Cardiac septum (tissue), 1 donor: ENCODE measurements at regions of chr5 and their contacts with region 1.

Region 1: GRCh38 chr5:63401436-63402046 is 560.7 kb downstream of the HTR1A start:
- DNase-seq: no peak

Region 2: DNA sequence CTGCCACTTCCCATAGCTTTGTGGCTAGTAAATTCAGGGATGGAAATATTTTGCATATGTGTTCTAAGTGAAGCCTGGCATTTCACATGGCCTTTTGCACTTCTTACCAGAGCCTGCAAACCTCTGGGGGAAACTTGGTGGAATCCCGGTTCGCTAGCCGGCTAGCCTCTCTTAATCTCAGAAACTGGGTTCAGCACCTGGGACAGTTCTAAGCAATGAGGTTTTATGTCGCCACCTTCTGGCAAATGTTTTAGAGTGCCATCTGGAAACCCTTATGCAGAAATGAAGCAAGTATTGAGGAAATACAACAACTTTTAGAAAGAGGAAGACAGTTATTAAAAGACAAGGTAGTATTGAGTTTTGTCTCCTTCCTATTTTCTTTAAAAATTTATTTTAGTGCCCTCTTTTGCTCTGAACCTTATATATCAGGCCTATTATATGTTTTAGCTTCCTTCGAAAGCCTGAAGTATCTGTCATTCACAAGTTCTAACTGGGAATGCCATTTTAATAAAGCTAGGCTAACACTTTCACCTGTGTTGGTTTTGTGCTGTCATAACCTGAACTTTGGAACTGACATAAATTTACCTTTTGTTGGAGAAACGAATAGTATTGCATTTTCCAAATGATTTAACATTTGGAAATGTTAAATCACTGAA is 561.7 kb after region 1 on chr5:
- intact Hi-C with region 1: loop called (anchors 2 kb)
- DNase-seq: no peak